ENCODE measurements at regions of chr20 and their contacts with region 1.

Region 1: DNA sequence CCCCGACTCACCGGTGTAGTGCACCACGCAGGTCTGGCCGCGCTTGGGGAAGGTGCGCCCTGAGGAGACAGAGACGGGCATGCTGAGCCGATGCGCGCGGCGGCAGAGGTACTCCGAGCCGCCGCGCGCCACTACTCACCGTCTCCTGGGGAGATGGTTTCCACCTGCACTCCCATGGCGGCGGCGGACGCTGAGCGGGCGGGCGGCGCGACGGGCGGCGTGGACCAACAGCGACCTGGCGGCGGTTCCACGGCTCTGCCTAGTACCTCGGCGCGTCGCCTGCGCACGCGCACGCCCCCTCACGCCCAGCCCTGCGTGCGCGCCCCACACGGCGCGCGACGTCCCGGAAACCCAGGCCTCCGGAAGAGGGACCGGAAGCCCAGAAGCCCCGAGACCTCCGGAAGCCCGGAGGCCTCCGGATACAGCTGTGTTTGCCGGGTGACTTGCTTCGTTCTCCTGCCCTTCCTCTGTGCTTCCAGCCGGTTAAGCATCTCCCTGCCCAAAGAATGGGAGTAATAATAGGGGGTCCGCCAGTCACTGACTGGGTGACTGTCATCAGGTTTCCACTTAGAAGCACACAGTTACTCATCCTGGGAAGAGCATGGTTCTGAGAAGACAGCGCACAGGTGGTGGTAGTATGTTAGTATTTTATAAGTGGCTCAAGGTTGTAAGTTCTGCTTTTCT is at the start of gene FKBP1A:
- DNase-seq: peak; percentile 95
- H3K4me3 ChIP-seq: peak within 1 kb of the TSS; percentile 91
- H3K27ac ChIP-seq: peak within 1 kb of the TSS; percentile 39
- H3K4me1 ChIP-seq: peaks cover 51% of the 10 kb centered on the region
- CTCF ChIP-seq: no peak
- total RNA-seq, gene FKBP1A: 83.2 and 99.0 TPM in 2 replicates

Region 2: DNA sequence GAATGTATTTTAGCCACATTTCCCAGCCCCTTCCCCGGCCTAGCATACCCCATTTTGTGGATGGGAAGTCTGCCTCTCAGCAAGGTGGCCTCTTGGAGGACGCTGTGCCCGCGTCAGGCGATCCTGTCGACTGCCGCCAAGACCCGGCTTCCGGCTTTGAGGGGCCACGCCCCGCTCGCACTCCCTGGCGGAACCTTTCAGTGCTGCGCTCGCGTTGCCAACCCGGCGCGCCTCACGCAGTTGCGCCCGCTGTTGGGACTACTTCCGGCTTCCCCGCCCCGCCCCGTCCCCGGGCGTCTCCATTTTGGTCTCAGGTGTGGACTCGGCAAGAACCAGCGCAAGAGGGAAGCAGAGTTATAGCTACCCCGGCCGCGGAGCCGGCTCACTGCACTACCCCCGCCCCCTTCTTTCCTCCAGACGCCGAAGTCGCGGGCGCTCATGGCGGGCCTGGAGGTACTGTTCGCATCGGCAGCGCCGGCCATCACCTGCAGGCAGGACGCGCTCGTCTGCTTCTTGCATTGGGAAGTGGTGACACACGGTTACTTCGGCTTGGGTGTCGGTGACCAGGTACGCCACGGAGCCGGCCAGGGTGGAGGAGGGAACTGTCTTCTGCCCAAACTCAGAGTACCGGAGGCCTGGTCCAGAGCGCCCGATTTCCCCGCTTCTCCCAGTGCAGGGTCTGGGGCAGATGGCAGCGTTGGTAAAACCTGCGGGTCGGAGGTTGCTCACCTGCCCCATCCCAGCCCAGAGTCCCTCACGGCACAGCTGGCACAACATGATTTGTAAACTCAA is 274.4 kb before region 1 on chr20 and contains the start of gene PSMF1:
- CTCF ChIA-PET with region 1: no interaction called
- POLR2A ChIA-PET with region 1: interaction called, 3 read pairs
- intact Hi-C with region 1: loop called (anchors 2 kb)
- DNase-seq: peak; percentile 97
- H3K4me3 ChIP-seq: peak within 1 kb of the TSS; percentile 96
- H3K27ac ChIP-seq: peak within 1 kb of the TSS; percentile 53
- H3K4me1 ChIP-seq: peaks cover 41% of the 10 kb centered on the region
- CTCF ChIP-seq: no peak
- total RNA-seq, gene PSMF1: 31.7 and 34.7 TPM in 2 replicates

Region 3: DNA sequence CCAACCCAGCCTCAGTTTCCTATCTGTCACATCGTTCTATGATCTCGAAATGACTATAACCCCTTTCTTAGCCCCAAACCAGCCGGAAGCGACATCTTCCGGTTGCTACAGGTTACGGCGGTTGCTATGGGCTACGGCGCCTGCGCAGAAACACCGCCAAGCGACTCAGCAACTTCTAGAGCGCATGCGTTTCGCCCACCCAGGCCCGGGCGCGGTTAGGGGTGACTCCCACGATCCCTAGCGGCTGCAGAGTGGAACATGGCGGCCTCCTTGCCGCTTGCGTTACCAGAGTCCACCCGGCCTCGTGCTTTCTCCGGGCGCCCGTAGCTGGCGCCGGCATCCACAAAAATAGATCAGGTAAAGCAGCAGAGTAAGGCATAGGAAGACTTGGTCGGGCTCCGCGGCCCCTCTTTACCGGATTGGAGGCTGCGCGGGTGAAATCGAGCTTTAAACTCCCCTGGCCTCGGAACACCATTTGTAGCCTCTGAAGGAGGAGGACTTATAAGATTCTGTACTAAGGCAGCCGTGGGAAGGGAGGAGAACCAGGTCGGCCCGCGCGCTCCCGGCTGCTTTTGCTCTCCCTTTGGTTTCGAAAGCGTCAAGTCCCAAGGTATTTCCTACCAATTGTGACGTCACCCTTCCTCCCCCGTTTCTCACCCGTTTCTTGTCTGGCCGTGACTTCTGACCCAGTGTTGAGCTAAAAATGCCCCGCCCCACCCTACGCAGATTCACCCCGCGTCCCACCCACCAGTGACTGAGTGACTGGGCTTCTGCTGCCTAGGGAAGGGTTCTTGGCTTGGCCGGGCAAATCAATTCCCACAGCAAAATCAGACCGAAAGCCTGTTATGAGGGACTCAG is 67.6 kb before region 1 on chr20:
- CTCF ChIA-PET with region 1: no interaction called
- POLR2A ChIA-PET with region 1: interaction called, 13 read pairs
- intact Hi-C with region 1: loop called (anchors 2 kb)
- DNase-seq: peak; percentile 98
- H3K4me3 ChIP-seq: peak overlapping the region; percentile 82
- H3K27ac ChIP-seq: peak overlapping the region; percentile 60
- H3K4me1 ChIP-seq: peaks cover 46% of the 10 kb centered on the region
- CTCF ChIP-seq: no peak

Region 4: GRCh38 chr20:1381753-1382591 is 11.0 kb before region 1 on chr20:
- CTCF ChIA-PET with region 1: interaction called, 10 read pairs
- POLR2A ChIA-PET with region 1: interaction called, 11 read pairs
- intact Hi-C with region 1: no loop called
- DNase-seq: no peak
- H3K4me3 ChIP-seq: no peak overlapping the region
- H3K27ac ChIP-seq: no peak overlapping the region
- H3K4me1 ChIP-seq: peaks cover 16% of the 10 kb centered on the region
- CTCF ChIP-seq: no peak

Region 5: DNA sequence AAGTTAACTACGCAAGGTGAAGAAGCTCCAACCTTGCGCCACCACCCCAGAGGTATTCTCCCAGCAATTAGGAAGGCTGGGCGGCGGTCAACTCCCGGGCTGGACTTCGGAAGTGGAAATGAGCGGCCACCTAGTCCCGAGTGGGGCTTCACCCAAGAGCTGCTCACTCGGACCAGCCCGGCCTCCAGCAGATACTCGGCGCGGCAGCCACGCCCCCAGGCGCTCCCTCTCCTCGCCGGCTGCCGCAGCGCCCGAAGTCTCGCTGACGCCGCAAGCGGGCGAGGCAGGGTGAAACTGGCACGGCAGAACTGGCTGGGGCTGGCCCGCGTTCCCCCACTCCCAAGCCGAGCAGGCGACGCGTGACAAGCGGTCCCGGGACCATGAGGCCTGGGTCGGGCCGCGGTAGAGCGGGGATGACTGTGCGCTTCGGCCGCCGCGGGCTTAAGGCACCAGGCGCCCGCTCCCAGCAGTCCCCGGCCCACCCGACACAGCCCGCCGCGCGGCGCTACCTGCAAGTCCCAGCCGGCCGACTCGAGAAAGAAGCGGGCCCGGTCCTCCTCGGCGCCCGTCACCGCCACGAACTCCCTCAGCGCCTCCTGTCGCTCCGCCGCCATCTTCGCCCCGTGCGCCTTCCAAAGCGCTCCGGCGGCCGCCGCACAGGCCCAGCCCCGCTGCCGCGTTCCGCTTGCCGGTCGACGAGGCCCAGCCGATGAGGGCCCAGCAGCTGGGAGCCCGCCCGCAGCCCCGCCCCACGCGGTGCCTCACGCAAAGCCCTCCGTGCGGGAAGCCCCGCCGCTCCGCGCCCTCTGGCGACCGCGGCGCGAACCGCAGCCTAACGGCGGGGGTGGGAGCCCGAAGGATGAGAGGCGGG is 73.5 kb after region 1 on chr20 and contains the start of gene NSFL1C:
- CTCF ChIA-PET with region 1: no interaction called
- POLR2A ChIA-PET with region 1: no interaction called
- intact Hi-C with region 1: loop called (anchors 1 kb)
- DNase-seq: peak; percentile 96
- H3K4me3 ChIP-seq: peak within 1 kb of the TSS; percentile 85
- H3K27ac ChIP-seq: peak within 1 kb of the TSS; percentile 46
- H3K4me1 ChIP-seq: peaks cover 35% of the 10 kb centered on the region
- CTCF ChIP-seq: peak; percentile 85
- total RNA-seq, gene NSFL1C: 40.2 and 49.6 TPM in 2 replicates

Measured in OCI-LY7 (cell line).